ENCODE measurements at regions of chr1 and their contacts with region 1.

Region 1: GRCh38 chr1:225777583-225778336 is at the start of gene SRP9:
- DNase-seq: peak; percentile 98 to 99
- H3K4me3 ChIP-seq: peak within 1 kb of the TSS; percentile 62 to 87
- H3K27ac ChIP-seq: peak within 1 kb of the TSS; percentile 93 to 96
- H3K4me1 ChIP-seq: peaks cover 0 to 5% of the 10 kb centered on the region in 2 donors
- H3K27me3 ChIP-seq: no peaks in the 10 kb centered on the region
- CTCF ChIP-seq: peak; percentile 84 to 95 (median 90)
- POLR2A ChIP-seq: peak; percentile 66 to 83
- total RNA-seq, gene SRP9: 169 to 551 (median 202) TPM

Region 2: GRCh38 chr1:225652729-225653462 is 124.9 kb before region 1 on chr1 and contains the start of gene ENAH:
- intact Hi-C with region 1: loop called (anchors 10 kb)
- DNase-seq: peak; percentile 85 to 86
- H3K4me3 ChIP-seq: peak within 1 kb of the TSS; percentile 79 to 89
- H3K27ac ChIP-seq: peak within 1 kb of the TSS; percentile 99 to 100
- H3K4me1 ChIP-seq: no peaks in the 10 kb centered on the region
- H3K27me3 ChIP-seq: no peaks in the 10 kb centered on the region
- CTCF ChIP-seq: peak in 2 of 4 experiments; percentile 2 to 22
- POLR2A ChIP-seq: peak; percentile 86 to 98
- total RNA-seq, gene ENAH: 22.9 to 109 (median 78.3) TPM

Measured in uterus (tissue), 4 donors.